Right ventricle myocardium inferior (tissue), 1 donor: ENCODE measurements at regions of chr7 and their contacts with region 1.

Region 1: DNA sequence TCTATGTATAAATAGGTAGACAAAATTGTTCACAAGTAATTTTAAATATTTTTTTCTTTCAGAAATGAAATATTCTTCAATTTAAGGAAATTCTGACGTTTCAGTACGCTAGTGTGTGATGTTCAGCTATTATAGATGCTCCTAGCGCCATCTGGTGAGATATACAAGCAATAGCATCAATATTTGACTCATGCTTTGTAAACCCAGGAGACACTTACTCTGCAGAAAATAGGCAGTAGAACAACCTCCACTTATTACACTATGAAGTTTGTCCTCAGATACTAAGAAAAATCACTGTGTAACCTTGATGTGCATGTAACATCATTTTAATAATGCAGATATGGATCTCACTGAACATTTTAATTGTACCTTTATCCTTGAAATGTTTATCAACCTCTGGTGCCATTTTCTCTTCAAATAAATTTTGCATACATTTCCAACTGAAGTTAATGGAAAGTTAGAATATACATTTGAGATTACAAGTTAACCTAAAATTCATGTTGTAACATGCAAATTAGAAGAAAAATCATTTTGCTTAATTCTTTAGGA is 151.5 kb upstream of the FAM3C start:
- DNase-seq: no peak
- ATAC-seq: peak; percentile 80

Region 2: DNA sequence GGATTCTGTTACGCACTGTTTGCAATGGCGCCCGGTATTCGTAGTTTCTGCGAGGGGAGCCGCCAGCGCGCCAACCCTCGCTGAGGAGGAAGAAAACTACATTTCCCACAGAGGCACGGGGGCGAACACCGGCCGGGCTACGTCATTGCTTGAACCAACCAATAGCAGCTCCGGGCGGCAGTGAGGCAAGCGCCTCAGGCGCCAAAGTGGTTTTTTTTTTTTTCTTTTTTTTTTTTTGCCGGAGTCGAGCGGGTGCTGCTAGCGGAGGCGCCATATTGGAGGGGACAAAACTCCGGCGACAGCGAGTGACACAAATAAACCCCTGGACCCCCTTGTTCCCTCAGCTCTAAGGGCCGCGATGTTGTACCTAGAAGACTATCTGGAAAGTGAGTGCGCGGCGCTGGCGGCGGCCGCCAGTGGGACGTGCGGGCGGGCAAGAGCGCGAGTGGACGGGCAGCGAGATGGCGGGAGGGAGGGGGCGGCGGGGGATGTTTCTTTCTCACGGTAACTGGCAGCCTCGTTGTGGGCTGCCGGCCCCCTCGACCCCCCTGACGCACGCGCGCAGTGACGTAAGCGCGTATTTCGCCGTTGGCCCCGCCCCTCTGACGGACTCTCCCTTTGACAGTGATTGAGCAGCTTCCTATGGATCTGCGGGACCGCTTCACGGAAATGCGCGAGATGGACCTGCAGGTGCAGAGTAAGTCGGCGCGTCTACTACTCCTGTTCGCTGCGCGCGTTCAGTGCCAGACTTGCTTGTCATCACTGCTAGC is 596.9 kb before region 1 on chr7 and contains the start of gene ING3:
- intact Hi-C with region 1: no loop called
- DNase-seq: peak; percentile 97
- ATAC-seq: peak; percentile 99
- total RNA-seq, gene ING3: 14.1 TPM

Region 3: DNA sequence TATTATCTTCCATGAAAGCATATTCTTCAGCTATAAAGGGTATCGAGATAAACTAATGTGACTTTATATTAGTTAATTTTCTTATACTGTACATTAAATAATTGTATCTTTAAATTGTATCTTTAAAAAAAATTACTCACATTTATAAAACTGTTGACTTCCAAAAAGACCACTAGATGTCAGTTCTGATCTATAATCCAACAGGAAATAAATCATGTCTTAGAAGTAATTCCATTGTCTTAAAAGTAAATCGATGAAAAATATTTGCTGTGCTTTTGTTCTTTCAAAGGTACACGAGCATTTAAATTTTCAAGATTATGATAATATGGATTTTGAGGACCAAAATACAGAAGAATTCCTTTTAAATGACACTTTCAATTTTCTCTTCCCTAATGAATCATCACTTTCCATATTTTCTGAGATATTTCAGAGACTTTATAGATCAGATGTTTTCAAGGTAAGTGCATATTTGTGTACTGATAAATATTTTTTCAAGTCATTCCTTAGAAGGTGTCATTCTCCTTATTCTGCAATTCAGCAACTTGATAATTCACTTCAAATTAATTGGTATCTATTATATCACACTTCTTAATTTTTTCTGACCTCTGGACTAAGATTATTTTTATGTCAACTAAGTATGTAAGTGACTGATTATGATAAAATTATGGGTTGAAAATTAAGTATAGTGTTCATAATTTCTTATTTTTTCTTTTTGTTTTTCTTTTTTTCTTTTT is 420.6 kb before region 1 on chr7:
- intact Hi-C with region 1: loop called (anchors 10 kb)
- DNase-seq: no peak
- ATAC-seq: no peak

Region 4: DNA sequence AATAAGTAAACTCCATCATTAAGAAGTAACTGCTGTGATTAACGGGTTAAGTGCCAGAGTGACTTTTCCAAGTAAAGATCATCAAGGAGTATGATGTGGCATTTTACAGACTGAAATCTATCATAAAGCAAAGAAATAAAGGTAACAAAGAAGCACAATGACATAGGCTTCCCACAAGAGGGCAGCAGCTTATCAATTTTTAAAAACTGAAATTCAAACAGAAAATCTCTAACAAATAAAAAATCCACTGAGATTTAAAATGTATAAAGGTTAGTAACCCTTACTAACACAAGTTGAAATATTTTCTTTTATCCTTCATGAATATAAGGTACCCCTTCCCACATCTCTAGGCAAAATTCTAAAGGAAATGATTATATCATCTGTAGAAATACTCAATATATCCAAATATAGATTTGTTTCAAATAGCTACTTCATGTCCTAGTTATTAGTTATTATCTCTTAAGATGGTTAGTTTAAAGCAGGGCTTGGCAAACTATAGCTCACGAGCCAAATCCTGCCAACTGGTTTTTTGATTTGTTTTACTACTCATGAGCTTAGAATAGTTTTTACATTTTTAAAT is 180.7 kb before region 1 on chr7:
- intact Hi-C with region 1: loop called (anchors 1 kb)
- DNase-seq: no peak
- ATAC-seq: no peak

Region 5: DNA sequence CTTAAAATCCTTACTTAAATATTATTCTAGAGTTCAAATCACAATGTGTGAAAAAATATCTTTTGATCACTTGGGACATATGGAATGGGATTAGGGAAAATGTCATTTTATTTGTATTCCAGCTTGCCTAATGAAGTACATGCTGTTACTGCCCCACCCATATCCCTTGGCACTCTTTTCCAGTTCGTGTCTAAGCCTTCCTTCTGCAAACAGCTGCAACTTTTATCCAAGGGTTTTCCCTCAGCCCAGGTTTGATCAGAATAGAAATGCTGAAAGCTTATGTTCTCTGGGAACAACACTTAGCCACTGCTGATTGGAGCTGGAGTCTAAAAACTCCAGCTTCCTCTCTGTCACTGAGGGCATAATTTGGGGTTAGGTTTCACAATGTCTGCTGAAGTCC is 62.6 kb after region 1 on chr7:
- intact Hi-C with region 1: no loop called
- DNase-seq: no peak
- ATAC-seq: peak; percentile 80